ENCODE measurements at regions of chr3 and their contacts with region 1.

Region 1: GRCh38 chr3:156449712-156450574 is 105.0 kb downstream of the SSR3 start:
- DNase-seq: peak in 2 of 9 experiments; percentile 16 to 29
- ATAC-seq: no peak
- H3K4me3 ChIP-seq: no peak overlapping the region
- H3K4me3 Mint-ChIP-seq: no peak overlapping the region
- H3K27ac ChIP-seq: no peak overlapping the region
- H3K27ac Mint-ChIP-seq: no peak overlapping the region
- H3K4me1 ChIP-seq: no peaks in the 10 kb centered on the region
- H3K4me1 Mint-ChIP-seq: no peaks in the 10 kb centered on the region
- H3K27me3 ChIP-seq: no peaks in the 10 kb centered on the region
- H3K27me3 Mint-ChIP-seq: no peaks in the 10 kb centered on the region
- CTCF ChIP-seq: peak; percentile 14

Region 2: GRCh38 chr3:156334841-156335564 is 114.9 kb before region 1 on chr3:
- CTCF ChIA-PET with region 1: no interaction called
- POLR2A ChIA-PET with region 1: no interaction called
- intact Hi-C with region 1: no loop called
- DNase-seq: no peak
- ATAC-seq: no peak
- H3K4me3 ChIP-seq: no peak overlapping the region
- H3K4me3 Mint-ChIP-seq: no peak overlapping the region
- H3K27ac ChIP-seq: no peak overlapping the region
- H3K27ac Mint-ChIP-seq: no peak overlapping the region
- H3K4me1 ChIP-seq: no peaks in the 10 kb centered on the region
- H3K4me1 Mint-ChIP-seq: no peaks in the 10 kb centered on the region
- H3K27me3 ChIP-seq: peaks cover 0 to 2% of the 10 kb centered on the region in 2 experiments
- H3K27me3 Mint-ChIP-seq: peaks cover 17% of the 10 kb centered on the region
- CTCF ChIP-seq: no peak

Region 3: DNA sequence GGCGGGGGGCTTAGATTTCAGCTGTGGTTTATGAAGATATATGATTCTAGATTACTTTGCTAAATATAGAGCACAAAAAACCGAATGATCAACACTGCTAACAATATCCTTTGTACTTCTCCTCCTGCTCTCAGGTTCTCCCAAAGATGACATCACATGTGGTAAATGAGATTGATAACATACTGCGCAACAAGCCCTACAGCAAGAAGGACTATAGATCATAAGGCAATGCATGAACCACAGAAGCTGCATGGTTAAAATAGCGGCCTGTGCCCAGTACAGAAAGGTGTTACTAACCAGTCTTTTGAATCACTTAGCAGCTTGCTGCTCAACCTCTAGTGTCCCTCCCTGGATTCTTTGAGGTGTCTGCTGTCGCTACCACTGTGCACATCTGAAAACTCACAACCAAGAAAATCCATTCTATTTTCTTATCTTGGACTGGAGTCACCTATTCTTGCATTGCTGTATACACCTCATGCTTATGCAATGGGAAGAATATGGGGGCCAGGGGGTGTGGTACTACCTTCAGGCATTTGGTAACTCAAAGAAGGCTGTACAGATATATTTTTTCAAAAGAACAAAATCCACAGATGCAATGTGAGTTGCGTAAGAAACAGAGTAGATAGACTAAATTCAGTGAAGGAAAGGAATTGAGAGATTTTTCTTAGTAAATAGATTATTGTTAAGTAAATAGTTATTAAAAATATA is 86.7 kb after region 1 on chr3:
- CTCF ChIA-PET with region 1: no interaction called
- POLR2A ChIA-PET with region 1: no interaction called
- intact Hi-C with region 1: loop called in 1 of 2 experiments (anchors 1 kb)
- DNase-seq: no peak
- ATAC-seq: no peak
- H3K4me3 ChIP-seq: no peak overlapping the region
- H3K4me3 Mint-ChIP-seq: no peak overlapping the region
- H3K27ac ChIP-seq: no peak overlapping the region
- H3K27ac Mint-ChIP-seq: no peak overlapping the region
- H3K4me1 ChIP-seq: no peaks in the 10 kb centered on the region
- H3K4me1 Mint-ChIP-seq: no peaks in the 10 kb centered on the region
- H3K27me3 ChIP-seq: no peaks in the 10 kb centered on the region
- H3K27me3 Mint-ChIP-seq: no peaks in the 10 kb centered on the region
- CTCF ChIP-seq: no peak